Prostate gland (tissue), 2 donors: ENCODE measurements at regions of chr4 and their contacts with region 1.

Region 1: DNA sequence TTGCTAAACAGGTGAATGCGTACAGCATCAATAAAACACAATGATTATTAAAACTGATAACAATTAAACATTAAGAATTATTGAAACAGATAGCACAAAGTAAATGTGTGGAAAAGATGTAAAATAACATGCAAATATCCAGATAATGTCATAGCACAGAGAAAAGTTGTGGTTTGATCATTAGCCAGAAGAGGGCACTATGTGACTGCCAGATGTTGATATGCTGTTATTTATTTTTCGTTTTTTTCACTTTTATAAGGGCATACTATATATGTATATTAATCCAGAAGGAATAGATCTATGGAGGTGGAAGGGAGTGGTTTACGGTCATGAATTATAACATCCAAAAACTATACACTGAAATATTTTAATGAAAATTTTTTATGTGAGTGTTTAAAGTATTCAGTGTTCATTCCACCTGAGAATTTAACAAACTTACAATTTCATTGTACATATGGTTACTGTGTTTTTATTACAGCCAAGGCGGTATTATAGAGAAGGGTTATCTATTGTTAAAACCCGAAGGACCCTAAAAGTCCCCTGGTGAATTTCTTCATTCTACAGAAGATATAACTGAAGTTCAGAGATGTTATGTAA is 211.9 kb upstream of the UGT8 start:
- DNase-seq: no peak
- H3K4me3 ChIP-seq: no peak overlapping the region
- H3K27ac ChIP-seq: no peak overlapping the region
- H3K4me1 ChIP-seq: no peaks in the 10 kb centered on the region
- H3K27me3 ChIP-seq: no peaks in the 10 kb centered on the region
- CTCF ChIP-seq: peak; percentile 36 to 79 (median 69)
- POLR2A ChIP-seq: no peak

Region 2: GRCh38 chr4:113781439-113782040 is 605.2 kb before region 1 on chr4:
- intact Hi-C with region 1: loop called (anchors 5 kb)
- DNase-seq: no peak
- H3K4me3 ChIP-seq: no peak overlapping the region
- H3K27ac ChIP-seq: no peak overlapping the region
- H3K4me1 ChIP-seq: no peaks in the 10 kb centered on the region
- H3K27me3 ChIP-seq: no peaks in the 10 kb centered on the region
- CTCF ChIP-seq: peak; percentile 18 to 67 (median 46)
- POLR2A ChIP-seq: no peak

Region 3: GRCh38 chr4:114659386-114660008 is 272.8 kb after region 1 on chr4:
- intact Hi-C with region 1: loop called (anchors 5 kb)
- DNase-seq: peak; percentile 49
- H3K4me3 ChIP-seq: no peak overlapping the region
- H3K27ac ChIP-seq: no peak overlapping the region
- H3K4me1 ChIP-seq: no peaks in the 10 kb centered on the region
- H3K27me3 ChIP-seq: no peaks in the 10 kb centered on the region
- CTCF ChIP-seq: peak in 3 of 4 experiments; percentile 56 to 72 (median 62)
- POLR2A ChIP-seq: no peak